ENCODE measurements at regions of chr2 and their contacts with region 1.

Region 1: GRCh38 chr2:12176623-12177454 is 430.4 kb downstream of the LPIN1 start:
- DNase-seq: peak; percentile 24 to 59
- ATAC-seq: peak; percentile 89 to 93
- H3K4me3 ChIP-seq: no peak overlapping the region
- H3K27ac ChIP-seq: peak overlapping the region in 3 of 4 donors; percentile 12 to 43 (median 41)
- H3K4me1 ChIP-seq: peaks cover 15 to 16% of the 10 kb centered on the region in 2 donors
- H3K27me3 ChIP-seq: no peaks in the 10 kb centered on the region
- CTCF ChIP-seq: no peak
- POLR2A ChIP-seq: no peak

Region 2: DNA sequence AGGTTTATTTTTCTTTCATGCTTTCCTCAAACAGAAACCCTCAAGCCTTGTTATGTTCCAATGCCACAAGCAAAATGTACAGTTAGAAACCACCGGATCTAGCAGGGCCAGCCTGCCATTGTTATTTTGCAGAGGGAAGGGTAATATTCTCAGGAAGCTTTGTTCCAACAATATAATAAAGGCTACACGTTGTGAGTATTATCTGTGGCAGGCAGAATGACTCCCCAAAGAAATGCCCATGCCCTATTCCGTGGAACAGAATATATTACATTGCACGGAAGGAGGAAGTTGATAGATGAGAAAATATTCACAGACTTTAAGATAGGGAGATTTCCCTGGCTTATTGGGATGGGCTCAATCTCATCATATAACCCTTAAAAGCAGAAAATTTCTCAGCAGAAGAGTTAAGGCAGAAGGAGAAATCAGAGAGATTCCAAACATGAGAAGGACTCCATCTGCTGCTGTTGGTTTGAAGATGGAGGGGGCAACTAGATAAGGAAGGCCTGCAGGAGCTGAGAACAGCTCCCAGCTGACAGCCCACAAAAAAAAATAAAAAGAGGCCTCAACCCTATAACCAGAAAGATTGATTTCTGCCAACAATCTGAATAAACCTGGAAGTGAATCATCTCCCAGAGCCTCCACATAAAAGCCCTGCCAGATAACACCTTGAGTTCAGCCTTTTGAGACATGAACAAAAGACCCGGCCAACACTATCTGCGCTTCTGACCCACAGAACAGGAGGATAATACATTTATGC is 36.2 kb after region 1 on chr2:
- in situ Hi-C with region 1: no loop called
- intact Hi-C with region 1: no loop called
- DNase-seq: no peak
- ATAC-seq: no peak
- H3K4me3 ChIP-seq: no peak overlapping the region
- H3K27ac ChIP-seq: no peak overlapping the region
- H3K4me1 ChIP-seq: no peaks in the 10 kb centered on the region
- H3K27me3 ChIP-seq: no peaks in the 10 kb centered on the region
- CTCF ChIP-seq: no peak
- POLR2A ChIP-seq: no peak

Region 3: DNA sequence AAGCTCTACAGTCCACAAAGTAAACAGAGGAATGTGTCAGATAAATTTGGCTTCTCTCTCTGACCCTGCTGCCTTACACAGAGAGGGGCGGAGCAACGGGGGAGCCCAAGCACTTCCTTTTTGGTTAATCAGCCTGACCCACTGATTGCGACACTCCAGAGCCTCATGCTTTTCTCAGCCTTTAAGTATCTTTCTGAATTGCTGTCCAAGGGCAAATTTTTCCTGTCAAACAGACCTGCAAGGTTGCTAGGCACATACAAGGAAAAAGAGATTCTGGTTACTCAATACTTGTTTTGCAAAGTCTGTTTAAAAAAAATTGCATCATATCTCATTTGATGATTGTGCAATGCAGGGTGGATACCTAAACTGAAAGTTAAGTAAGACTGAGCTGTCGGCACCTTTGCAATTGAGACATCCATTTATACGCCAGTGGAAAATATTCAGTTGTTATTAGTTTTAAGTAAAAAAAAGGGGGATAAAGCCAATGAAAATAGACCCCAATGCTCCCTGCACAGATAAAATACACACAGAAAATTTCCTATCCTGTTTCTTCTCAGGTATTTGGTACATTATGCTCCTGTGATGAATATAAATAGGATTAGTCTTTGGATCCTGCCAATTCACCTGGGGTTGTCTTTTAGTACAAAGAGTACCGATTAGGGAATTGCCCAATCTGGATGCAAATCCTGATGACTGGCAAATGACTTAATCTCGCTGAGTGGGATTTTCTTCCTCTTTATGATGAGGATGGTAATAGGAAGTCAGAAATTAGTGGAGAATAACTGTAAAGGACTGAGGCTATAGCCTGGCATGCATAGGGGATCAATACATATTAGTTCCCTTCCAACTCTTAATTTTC is 279.7 kb after region 1 on chr2:
- in situ Hi-C with region 1: no loop called
- intact Hi-C with region 1: loop called (anchors 5 kb)
- DNase-seq: peak; percentile 88 to 92
- ATAC-seq: peak; percentile 85 to 88
- H3K4me3 ChIP-seq: peak overlapping the region; percentile 18 to 26 (median 20)
- H3K27ac ChIP-seq: peak overlapping the region; percentile 60 to 82 (median 66)
- H3K4me1 ChIP-seq: peaks cover 18 to 32% of the 10 kb centered on the region in 2 donors
- H3K27me3 ChIP-seq: no peaks in the 10 kb centered on the region
- CTCF ChIP-seq: peak in 1 of 5 experiments; percentile 17
- POLR2A ChIP-seq: no peak

Measured in gastrocnemius medialis (tissue), 4 donors.